B cell (primary cell): ENCODE measurements at regions of chr4 and their contacts with region 1.

Region 1: GRCh38 chr4:80876810-80877209 is 153.7 kb upstream of the BMP3 start:
- DNase-seq: peak; percentile 34
- ATAC-seq: peak; percentile 34
- H3K4me3 ChIP-seq: peak overlapping the region in 1 of 5 experiments; percentile 21
- H3K4me3 Mint-ChIP-seq: peak overlapping the region; percentile 10
- H3K27ac ChIP-seq: peak overlapping the region; percentile 50 to 72
- H3K27ac Mint-ChIP-seq: peak overlapping the region; percentile 62
- H3K4me1 ChIP-seq: peaks cover 24 to 26% of the 10 kb centered on the region in 2 donors
- H3K4me1 Mint-ChIP-seq: peaks cover 31% of the 10 kb centered on the region
- H3K27me3 ChIP-seq: no peaks in the 10 kb centered on the region
- H3K27me3 Mint-ChIP-seq: no peaks in the 10 kb centered on the region
- CTCF ChIP-seq: no peak

Region 2: DNA sequence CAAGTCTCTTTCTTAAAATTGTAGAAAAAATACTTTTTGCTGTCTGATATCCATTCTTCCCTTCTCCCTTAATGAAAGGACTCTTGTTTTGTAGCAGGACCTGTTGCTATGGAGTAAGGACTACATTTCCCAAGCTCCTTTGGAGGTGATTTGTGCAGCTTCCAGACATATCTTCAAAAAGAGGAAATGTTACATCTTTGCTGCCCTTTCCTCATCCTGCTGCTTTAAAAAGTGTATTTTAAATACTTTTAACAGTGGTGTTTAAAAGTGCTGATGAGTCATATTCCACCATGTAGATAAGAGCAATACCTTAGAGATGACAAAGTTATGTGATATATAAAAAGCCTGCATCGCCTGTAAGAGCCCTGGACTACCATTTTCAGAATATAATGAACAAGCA is 442.6 kb before region 1 on chr4:
- CTCF ChIA-PET with region 1: no interaction called
- POLR2A ChIA-PET with region 1: no interaction called
- intact Hi-C with region 1: no loop called
- DNase-seq: no peak
- ATAC-seq: no peak
- H3K4me3 ChIP-seq: no peak overlapping the region
- H3K4me3 Mint-ChIP-seq: no peak overlapping the region
- H3K27ac ChIP-seq: no peak overlapping the region
- H3K27ac Mint-ChIP-seq: no peak overlapping the region
- H3K4me1 ChIP-seq: no peaks in the 10 kb centered on the region
- H3K4me1 Mint-ChIP-seq: no peaks in the 10 kb centered on the region
- H3K27me3 ChIP-seq: no peaks in the 10 kb centered on the region
- H3K27me3 Mint-ChIP-seq: peaks cover 2% of the 10 kb centered on the region
- CTCF ChIP-seq: no peak

Region 3: GRCh38 chr4:80610845-80611677 is 265.7 kb before region 1 on chr4:
- CTCF ChIA-PET with region 1: no interaction called
- POLR2A ChIA-PET with region 1: no interaction called
- intact Hi-C with region 1: loop called (anchors 10 kb)
- DNase-seq: peak; percentile 78
- ATAC-seq: peak; percentile 75
- H3K4me3 ChIP-seq: peak overlapping the region in 3 of 5 experiments; percentile 5 to 42 (median 27)
- H3K4me3 Mint-ChIP-seq: peak overlapping the region; percentile 79
- H3K27ac ChIP-seq: peak overlapping the region; percentile 49 to 77
- H3K27ac Mint-ChIP-seq: peak overlapping the region; percentile 86
- H3K4me1 ChIP-seq: peaks cover 20 to 41% of the 10 kb centered on the region in 2 donors
- H3K4me1 Mint-ChIP-seq: peaks cover 39% of the 10 kb centered on the region
- H3K27me3 ChIP-seq: no peaks in the 10 kb centered on the region
- H3K27me3 Mint-ChIP-seq: no peaks in the 10 kb centered on the region
- CTCF ChIP-seq: no peak